GM10248 (cell line): ENCODE measurements at regions of chr12 and their contacts with region 1.

Region 1: GRCh38 chr12:3885277-3886094 is 12.3 kb upstream of the PARP11 start:
- DNase-seq: peak; percentile 36
- CTCF ChIP-seq: peak; percentile 78

Region 2: DNA sequence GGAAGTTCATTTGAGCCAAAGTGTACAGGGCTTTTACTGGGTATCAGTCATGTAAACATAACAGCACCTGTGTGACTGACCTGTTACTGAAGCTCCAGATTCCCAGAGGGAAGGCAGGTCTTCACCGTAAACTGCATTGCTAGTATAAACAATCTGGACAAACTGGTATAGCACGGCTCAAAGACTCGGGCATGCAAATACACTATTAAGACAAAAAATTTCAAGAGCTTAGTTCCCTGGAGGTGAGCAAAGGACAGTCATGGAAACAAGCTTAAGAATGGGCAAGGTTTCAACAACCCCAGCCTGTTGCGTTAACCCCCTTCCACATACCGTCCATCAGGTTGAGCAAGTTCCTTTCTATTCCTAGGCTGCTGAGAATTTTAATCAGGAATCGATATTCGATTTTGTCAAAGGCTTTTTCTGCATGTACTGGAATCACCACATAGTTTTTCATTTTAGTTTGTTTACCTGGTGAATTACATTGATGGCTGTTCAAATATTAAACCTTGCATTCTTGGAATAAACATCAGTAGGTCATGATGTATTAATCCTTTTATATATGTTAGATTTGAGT is 21.6 kb before region 1 on chr12:
- CTCF ChIA-PET with region 1: interaction called, 24 read pairs
- POLR2A ChIA-PET with region 1: no interaction called
- DNase-seq: no peak
- CTCF ChIP-seq: no peak

Region 3: DNA sequence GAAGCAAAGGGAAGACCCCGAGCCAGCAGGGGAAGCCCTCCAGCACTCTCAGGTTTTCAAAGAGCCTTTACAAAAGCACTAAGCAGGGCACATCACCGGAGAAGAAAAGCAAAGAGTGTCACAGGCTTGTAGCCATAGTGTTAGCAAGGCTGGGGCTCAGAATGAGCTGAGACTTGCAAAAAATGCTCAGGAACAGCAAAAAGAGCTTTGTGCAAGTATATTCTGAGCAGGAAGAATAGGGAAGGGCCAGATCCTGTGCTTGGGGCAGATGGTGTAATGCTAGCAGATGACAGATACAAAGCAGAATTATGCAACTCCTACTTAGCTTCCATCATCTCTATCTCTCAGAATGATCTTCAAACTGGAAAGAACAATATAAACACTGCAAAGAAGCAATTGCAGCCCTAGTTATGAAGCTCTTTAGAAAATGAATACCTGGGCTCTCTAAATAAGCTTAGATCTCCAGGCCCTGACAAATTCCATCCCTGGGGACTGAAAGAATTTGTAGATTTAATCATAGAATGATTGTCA is 11.4 kb after region 1 on chr12:
- CTCF ChIA-PET with region 1: interaction called, 26 read pairs
- POLR2A ChIA-PET with region 1: no interaction called
- DNase-seq: no peak
- CTCF ChIP-seq: no peak

Region 4: GRCh38 chr12:3988519-3989448 is 103.3 kb after region 1 on chr12:
- CTCF ChIA-PET with region 1: interaction called, 14 read pairs
- POLR2A ChIA-PET with region 1: no interaction called
- DNase-seq: peak; percentile 58
- CTCF ChIP-seq: no peak

Region 5: DNA sequence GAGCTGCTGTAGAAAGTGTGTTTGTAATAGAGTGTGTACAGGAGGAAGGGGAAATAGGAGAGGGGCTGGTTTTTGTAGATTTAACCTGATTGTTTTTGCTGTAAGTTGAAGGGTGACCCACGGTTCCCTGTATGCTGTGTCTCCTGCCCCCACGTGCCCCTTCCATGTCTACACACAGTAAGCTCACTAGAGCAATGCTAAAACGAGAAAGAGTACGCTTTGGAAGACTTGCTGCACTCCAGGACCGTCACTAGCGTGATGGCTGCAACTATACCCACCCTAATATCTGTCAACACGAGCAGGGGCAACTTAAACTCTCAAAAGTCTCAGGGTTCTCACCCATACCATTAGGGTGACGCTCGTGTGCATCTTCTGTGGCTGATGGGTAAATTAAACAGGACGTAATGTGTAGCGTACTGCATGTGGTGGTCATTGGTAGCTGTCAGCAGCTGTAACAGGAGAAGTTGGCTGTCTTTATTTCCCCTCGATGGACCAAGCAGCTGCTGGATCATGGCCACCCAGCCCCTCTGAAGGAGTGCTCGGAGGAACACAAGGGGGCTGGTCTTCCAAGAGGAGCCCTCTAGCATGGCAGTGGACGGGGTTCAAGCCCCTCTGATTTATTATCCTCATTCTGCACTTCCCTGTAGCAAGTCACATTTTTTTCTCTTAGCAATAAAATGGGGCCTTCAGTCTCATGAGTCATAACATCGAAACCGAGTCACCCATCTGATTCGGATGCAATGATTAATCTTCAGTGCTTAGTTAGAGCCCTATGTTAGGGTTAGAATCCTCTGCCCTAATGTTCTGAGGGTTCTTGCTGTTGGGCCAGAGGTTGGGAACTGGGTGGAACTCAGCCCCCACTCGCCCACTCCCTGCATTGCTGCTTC is 402.1 kb after region 1 on chr12:
- CTCF ChIA-PET with region 1: interaction called, 13 read pairs
- POLR2A ChIA-PET with region 1: no interaction called
- DNase-seq: no peak
- CTCF ChIP-seq: no peak